OCI-LY7 (cell line): ENCODE measurements at regions of chr19 and their contacts with region 1.

Region 1: DNA sequence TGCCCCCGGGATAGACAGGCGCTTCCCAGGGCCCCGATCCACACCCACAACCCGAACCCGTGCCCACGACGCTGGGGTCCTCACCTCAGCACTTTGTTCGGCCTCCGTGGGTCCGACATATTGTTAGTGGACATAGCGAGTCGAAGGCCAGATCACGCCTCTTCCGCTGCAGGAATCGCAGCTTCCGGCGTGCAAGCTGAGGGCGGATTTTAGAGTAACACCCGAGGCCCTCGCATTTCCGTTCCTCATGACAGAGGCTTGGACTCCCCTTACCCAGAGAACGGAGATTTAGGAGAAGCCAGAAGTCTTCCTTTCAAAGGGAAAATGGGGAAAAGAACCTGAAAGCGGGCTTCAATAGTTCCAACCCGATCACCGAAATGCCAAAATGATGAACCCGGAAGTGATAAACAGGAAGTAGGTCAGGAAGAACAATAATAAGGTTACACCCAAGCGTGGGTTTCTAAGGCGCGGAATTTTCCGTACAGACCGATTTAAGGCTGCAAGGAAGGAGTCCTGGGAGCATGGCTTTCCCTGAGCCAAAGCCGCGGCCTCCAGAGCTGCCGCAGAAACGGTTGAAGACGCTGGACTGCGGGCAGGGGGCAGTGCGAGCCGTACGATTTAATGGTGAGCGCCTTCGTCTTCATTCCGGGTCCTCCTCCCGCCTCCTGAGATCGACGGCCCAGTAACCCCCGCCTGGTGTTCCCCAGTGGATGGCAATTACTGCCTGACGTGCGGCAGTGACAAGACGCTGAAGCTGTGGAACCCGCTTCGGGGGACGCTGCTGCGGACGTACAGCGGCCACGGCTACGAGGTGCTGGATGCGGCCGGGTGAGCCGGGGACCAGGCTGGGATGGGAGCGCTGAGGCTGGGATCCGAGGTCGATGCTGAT is 2.9 kb downstream of the WDR83 start:
- DNase-seq: peak; percentile 88
- H3K4me3 ChIP-seq: peak overlapping the region; percentile 96
- H3K27ac ChIP-seq: peak overlapping the region; percentile 64
- H3K4me1 ChIP-seq: peaks cover 37% of the 10 kb centered on the region
- CTCF ChIP-seq: no peak

Region 2: DNA sequence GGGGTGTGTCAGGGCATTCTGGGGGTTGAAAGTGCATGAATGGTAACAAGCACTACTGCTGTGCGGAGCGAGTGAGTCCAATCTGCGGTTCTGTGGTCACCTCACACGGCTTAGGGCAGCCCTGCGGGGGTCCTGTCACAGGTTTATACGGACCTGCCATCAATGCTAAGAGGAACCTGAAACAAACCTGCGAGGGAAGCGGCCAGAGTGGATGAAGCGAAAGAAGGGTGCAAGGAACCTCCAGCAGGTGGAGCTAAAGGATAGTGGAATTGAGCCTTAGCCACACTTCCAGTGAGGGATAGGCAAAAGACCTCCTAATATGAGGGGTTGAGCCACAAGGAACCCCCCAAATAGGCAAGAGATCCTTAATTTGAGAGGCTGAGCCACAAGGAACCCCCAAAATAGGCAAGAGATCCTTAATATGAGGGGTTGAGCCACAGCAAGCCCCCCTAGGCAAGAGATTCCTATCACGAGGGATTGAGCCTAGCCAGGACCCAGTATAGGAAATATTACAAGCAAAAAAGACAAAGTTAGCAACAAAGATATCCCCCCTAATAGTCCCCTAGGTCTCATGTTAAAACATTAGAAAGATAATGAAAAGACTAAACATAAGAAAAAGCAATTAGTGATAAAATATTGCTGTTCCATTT is 788.2 kb before region 1 on chr19:
- CTCF ChIA-PET with region 1: no interaction called
- POLR2A ChIA-PET with region 1: no interaction called
- intact Hi-C with region 1: loop called (anchors 5 kb)
- DNase-seq: peak; percentile 72
- H3K4me3 ChIP-seq: no peak overlapping the region
- H3K27ac ChIP-seq: no peak overlapping the region
- H3K4me1 ChIP-seq: no peaks in the 10 kb centered on the region
- CTCF ChIP-seq: peak; percentile 83

Region 3: GRCh38 chr19:12564016-12564664 is 105.4 kb before region 1 on chr19:
- CTCF ChIA-PET with region 1: interaction called, 4 read pairs
- POLR2A ChIA-PET with region 1: no interaction called
- intact Hi-C with region 1: loop called (anchors 1 kb)
- DNase-seq: peak; percentile 87
- H3K4me3 ChIP-seq: no peak overlapping the region
- H3K27ac ChIP-seq: no peak overlapping the region
- H3K4me1 ChIP-seq: peaks cover 3% of the 10 kb centered on the region
- CTCF ChIP-seq: peak; percentile 97

Region 4: DNA sequence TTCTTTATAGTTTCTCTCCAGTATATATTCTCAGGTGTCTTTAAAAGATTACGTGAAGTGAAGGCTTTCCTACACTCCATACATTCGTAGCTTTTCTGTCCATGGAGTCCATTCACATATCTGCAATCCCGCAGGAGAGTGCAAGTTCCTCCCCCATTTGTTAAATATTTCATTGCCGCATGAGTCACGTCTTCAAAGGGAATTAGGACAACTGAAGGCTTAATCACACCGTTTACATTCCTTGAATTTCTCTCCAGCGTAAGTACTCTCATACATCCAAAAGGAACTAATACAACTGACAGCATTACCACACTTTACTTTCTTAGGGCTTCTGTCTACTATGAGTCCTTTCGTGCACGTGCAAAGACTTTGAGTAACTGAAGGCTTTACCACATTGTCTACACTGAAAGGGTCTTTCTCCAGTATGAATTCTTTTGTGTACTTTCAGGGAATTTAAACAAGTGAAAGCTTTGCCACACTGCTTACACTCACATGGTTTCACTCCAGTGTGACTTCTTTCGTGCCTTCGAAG is 89.3 kb before region 1 on chr19:
- CTCF ChIA-PET with region 1: no interaction called
- POLR2A ChIA-PET with region 1: no interaction called
- intact Hi-C with region 1: no loop called
- DNase-seq: no peak
- H3K4me3 ChIP-seq: no peak overlapping the region
- H3K27ac ChIP-seq: no peak overlapping the region
- H3K4me1 ChIP-seq: no peaks in the 10 kb centered on the region
- CTCF ChIP-seq: no peak

Region 5: DNA sequence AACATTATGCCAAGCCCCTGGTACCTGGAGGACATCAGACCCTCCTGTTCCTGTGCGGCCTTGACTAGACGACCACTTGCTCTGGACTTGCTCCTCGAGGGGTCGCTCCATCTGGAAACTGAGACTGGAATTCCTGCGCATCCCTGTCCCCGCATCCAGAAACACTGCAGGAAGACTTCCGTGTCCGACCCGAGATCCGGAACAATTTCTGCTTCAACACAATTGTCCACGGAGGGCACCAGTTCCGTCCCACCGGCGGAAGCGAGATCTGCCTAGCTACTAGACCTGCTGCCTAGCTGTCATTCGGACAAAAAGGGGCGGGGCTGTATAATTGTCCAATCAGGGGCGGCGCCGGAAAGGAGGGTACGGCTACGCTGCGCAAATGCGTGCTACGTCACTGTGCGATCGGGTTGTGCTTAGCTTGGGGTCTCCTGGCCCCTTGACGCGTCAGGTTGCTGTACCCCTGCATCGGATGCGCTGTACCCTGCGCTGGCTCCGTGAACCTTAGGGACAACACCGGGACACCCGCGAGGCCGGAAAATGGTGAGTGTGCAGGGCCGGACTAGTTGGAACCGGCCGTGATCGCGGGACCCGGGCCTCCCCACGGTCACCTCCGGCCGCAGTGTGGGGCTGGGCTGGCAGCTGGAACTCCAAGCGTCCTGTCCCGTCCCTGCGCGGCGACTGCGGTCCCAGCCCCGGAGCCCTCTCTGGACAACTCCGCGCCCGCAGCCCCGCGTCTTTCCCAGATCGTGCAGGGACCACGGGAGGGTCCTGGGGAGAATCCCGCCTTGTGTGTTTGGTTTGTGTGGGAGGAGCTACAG is 58.8 kb before region 1 on chr19 and contains the starts of genes ZNF490 and ZNF791:
- CTCF ChIA-PET with region 1: no interaction called
- POLR2A ChIA-PET with region 1: interaction called, 3 read pairs
- intact Hi-C with region 1: loop called (anchors 2 kb)
- DNase-seq: peak; percentile 98
- H3K4me3 ChIP-seq: peak within 1 kb of the TSS; percentile 90
- H3K27ac ChIP-seq: no peak within 1 kb of the TSS
- H3K4me1 ChIP-seq: peaks cover 37% of the 10 kb centered on the region
- CTCF ChIP-seq: peak; percentile 43; the same call in 1 of the 2 replicates
- total RNA-seq, gene ZNF490: 6.3 and 8.6 TPM in 2 replicates
- total RNA-seq, gene ZNF791: 5.3 and 7.8 TPM in 2 replicates

Region 6: GRCh38 chr19:12639901-12640613 is 29.5 kb before region 1 on chr19:
- CTCF ChIA-PET with region 1: no interaction called
- POLR2A ChIA-PET with region 1: no interaction called
- intact Hi-C with region 1: loop called (anchors 1 kb)
- DNase-seq: peak; percentile 83
- H3K4me3 ChIP-seq: no peak overlapping the region
- H3K27ac ChIP-seq: no peak overlapping the region
- H3K4me1 ChIP-seq: peaks cover 6% of the 10 kb centered on the region
- CTCF ChIP-seq: peak; percentile 86

Region 7: GRCh38 chr19:12681074-12681951 is 11.8 kb after region 1 on chr19 and contains the start of gene DHPS:
- CTCF ChIA-PET with region 1: no interaction called
- POLR2A ChIA-PET with region 1: interaction called, 4 read pairs
- intact Hi-C with region 1: loop called (anchors 1 kb)
- DNase-seq: peak; percentile 99
- H3K4me3 ChIP-seq: peak within 1 kb of the TSS; percentile 84
- H3K27ac ChIP-seq: peak within 1 kb of the TSS; percentile 94
- H3K4me1 ChIP-seq: peaks cover 11% of the 10 kb centered on the region
- CTCF ChIP-seq: 0 out of 2 replicates have a peak, but pooled peaks have one; percentile 24
- total RNA-seq, gene DHPS: 91.2 and 102 TPM in 2 replicates